ENCODE measurements at regions of chr1 and their contacts with region 1.

Region 1: GRCh38 chr1:212291505-212292134 is 6.4 kb downstream of the PPP2R5A start:
- DNase-seq: peak; percentile 9
- H3K4me3 ChIP-seq: no peak overlapping the region
- H3K27ac ChIP-seq: no peak overlapping the region
- H3K4me1 ChIP-seq: peaks cover 5% of the 10 kb centered on the region
- H3K27me3 ChIP-seq: no peaks in the 10 kb centered on the region
- CTCF ChIP-seq: peak in 3 of 4 experiments; percentile 21 to 64 (median 61)
- POLR2A ChIP-seq: no peak

Region 2: GRCh38 chr1:212070720-212071302 is 220.8 kb before region 1 on chr1:
- intact Hi-C with region 1: loop called (anchors 5 kb)
- DNase-seq: peak; percentile 8
- H3K4me3 ChIP-seq: no peak overlapping the region
- H3K27ac ChIP-seq: no peak overlapping the region
- H3K4me1 ChIP-seq: no peaks in the 10 kb centered on the region
- H3K27me3 ChIP-seq: no peaks in the 10 kb centered on the region
- CTCF ChIP-seq: peak; percentile 35 to 91 (median 86)
- POLR2A ChIP-seq: no peak

Region 3: DNA sequence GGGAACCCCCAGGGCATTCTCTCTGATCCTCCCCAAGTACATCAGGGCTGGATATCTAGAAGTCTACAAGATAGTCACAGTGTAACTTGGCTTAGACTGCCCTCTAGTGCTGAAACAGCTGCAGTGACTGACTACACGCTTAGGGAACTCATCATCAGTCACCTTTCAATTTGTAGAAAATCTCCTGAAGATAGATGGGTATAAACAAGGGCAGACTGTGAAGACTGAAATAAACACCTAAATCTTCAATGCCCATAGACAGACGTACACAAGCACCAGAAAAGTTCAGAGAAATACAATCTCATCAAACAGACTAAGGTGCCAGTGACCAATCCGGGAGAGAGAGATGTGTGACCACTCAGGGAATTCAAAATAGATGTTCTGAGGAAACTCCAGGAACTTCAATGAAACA is 76.5 kb after region 1 on chr1:
- intact Hi-C with region 1: loop called (anchors 5 kb)
- DNase-seq: peak; percentile 43
- H3K4me3 ChIP-seq: no peak overlapping the region
- H3K27ac ChIP-seq: no peak overlapping the region
- H3K4me1 ChIP-seq: no peaks in the 10 kb centered on the region
- H3K27me3 ChIP-seq: no peaks in the 10 kb centered on the region
- CTCF ChIP-seq: peak; percentile 42 to 74 (median 58)
- POLR2A ChIP-seq: no peak

Region 4: DNA sequence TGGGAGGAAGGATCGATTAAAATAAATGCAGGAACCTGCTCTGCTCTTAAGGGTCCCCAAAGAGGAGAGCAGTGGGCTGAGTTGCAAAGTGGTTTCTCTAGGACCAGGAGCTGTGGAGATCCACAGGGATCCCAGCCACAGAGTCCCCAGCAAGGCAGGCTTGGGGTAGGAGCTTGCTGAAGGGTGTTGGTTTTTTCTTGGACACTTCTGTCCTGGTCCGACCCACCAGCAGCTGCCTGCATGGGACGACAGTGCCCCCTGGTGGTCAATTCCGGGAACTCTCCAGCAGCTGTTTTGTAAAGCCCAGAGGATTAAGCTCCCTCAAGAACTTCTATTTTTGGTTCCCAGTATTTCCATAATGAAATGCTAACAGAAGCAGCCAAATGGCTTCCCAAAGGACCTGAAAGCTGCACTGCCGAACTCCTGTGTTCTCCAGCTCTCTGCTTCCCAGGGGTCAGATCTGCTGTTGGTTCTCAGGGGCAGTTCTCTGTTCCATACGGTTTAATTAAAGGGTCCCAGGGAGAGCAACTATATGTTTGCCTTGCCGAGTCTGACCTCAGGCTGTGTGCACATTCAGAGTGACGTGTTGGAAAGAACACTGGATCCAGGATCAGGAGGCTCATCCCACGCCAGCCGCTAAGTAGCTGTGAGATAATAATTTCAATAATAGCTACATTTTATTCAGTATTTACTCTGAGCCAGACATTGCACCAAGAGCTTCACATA is 164.3 kb after region 1 on chr1:
- intact Hi-C with region 1: loop called (anchors 10 kb)
- DNase-seq: peak; percentile 77
- H3K4me3 ChIP-seq: no peak overlapping the region
- H3K27ac ChIP-seq: no peak overlapping the region
- H3K4me1 ChIP-seq: no peaks in the 10 kb centered on the region
- H3K27me3 ChIP-seq: no peaks in the 10 kb centered on the region
- CTCF ChIP-seq: peak; percentile 92 to 98 (median 96)
- POLR2A ChIP-seq: no peak

Region 5: GRCh38 chr1:212665241-212666115 is 373.9 kb after region 1 on chr1:
- intact Hi-C with region 1: no loop called
- DNase-seq: peak; percentile 70
- H3K4me3 ChIP-seq: peak overlapping the region; percentile 38 to 56
- H3K27ac ChIP-seq: peak overlapping the region; percentile 65 to 72
- H3K4me1 ChIP-seq: no peaks in the 10 kb centered on the region
- H3K27me3 ChIP-seq: no peaks in the 10 kb centered on the region
- CTCF ChIP-seq: peak; percentile 81 to 98 (median 84)
- POLR2A ChIP-seq: peak; percentile 23

Measured in prostate gland (tissue), 2 donors.